ENCODE measurements at regions of chr15 and their contacts with region 1.

Region 1: GRCh38 chr15:89874926-89875564 is 18.7 kb downstream of the AP3S2 start:
- DNase-seq: peak; percentile 77 to 90
- ATAC-seq: peak; percentile 99 to 100
- H3K4me3 ChIP-seq: no peak overlapping the region
- H3K27ac ChIP-seq: no peak overlapping the region
- H3K4me1 ChIP-seq: no peaks in the 10 kb centered on the region
- CTCF ChIP-seq: peak; percentile 98
- EP300 ChIP-seq: no peak
- POLR2A ChIP-seq: no peak
- RAD21 ChIP-seq: peak; percentile 93 to 94

Region 2: GRCh38 chr15:89728254-89728653 is 146.8 kb before region 1 on chr15:
- CTCF ChIA-PET with region 1: interaction called, 19 read pairs
- POLR2A ChIA-PET with region 1: no interaction called
- DNase-seq: no peak
- ATAC-seq: no peak
- H3K4me3 ChIP-seq: no peak overlapping the region
- H3K27ac ChIP-seq: no peak overlapping the region
- H3K4me1 ChIP-seq: no peaks in the 10 kb centered on the region
- CTCF ChIP-seq: no peak
- EP300 ChIP-seq: no peak
- POLR2A ChIP-seq: no peak
- RAD21 ChIP-seq: no peak

Region 3: DNA sequence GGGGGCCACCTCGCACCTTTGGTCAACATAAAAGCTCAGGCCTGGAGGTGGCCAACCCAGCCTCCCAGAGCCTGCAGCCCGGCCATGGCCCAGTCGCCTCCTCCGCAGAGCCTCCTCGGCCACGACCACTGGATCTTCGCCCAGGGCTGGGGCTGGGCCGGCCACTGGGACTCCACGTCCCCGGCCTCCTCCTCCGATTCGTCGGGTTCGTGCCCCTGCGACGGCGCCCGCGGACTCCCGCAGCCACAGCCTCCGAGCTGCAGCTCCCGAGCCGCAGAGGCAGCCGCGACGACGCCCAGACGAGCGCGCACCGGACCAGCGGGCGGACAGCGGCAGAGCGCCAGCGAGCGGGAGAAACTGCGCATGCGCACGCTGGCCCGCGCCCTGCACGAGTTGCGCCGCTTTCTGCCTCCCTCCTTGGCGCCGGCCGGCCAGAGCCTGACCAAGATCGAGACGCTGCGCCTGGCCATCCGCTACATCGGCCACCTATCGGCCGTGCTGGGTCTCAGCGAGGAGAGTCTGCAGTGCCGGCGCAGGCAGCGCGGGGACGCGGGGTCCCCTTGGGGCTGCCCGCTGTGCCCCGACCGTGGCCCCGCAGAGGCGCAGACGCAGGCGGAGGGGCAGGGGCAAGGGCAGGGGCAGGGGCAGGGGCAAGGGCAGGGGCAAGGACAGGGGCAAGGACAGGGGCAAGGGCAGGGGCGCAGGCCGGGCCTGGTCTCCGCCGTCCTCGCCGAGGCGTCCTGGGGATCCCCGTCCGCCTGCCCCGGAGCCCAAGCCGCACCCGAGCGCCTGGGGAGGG is 98.6 kb before region 1 on chr15 and contains the start of gene MESP2:
- CTCF ChIA-PET with region 1: interaction called, 109 read pairs
- POLR2A ChIA-PET with region 1: interaction called, 3 read pairs
- DNase-seq: peak; percentile 73 to 90
- ATAC-seq: peak; percentile 87 to 96
- H3K4me3 ChIP-seq: peak within 1 kb of the TSS; percentile 38
- H3K27ac ChIP-seq: peak within 1 kb of the TSS; percentile 71 to 89
- H3K4me1 ChIP-seq: peaks cover 24% of the 10 kb centered on the region
- CTCF ChIP-seq: no peak
- EP300 ChIP-seq: no peak
- POLR2A ChIP-seq: peak; percentile 67
- RAD21 ChIP-seq: peak in 1 of 2 experiments; percentile 26; a peak in 2 of 5 replicates
- polyA plus RNA-seq, gene MESP2: 0.22 and 0.24 TPM in 2 replicates

Region 4: DNA sequence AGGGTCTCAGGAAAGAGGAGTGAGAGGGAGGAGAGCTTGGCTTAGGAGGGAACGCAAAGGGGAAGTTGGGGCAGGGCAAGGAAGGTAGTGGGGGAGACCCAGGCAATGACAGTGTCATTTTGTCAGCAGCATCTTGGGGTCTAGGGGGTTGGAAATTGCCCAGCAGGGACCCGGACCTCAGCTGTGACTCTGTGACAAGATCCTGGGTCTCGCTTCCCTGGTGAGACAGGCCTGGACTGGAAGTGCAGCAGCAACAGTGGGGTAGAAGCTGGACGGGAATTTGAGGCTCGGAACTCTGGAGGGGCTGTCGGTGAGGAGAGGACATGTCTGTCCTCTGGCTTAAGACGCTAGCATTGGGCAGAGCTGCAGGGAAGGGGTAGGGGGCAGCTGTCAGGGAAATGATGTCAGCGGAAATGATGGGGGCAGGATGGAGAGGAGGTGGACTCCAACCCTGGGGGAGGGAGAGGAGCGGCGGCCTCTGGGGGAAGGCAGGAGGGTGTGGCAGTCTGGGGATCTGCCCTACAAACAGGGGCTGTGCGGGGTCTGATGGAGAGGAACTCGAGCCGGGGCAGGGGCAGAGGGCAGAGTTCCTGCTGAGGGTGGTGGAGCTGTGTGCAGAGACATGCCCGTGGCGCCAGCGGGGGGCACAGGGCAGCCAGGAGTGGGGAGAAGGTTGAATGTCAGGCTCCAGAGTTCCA is 72.7 kb before region 1 on chr15:
- CTCF ChIA-PET with region 1: interaction called, 12 read pairs
- POLR2A ChIA-PET with region 1: no interaction called
- DNase-seq: no peak
- ATAC-seq: no peak; a peak in 1 of 6 replicates
- H3K4me3 ChIP-seq: no peak overlapping the region
- H3K27ac ChIP-seq: 0 out of 6 replicates have a peak overlapping the region, but pooled peaks of 1 of the 2 experiments have one; percentile 1
- H3K4me1 ChIP-seq: peaks cover 21% of the 10 kb centered on the region; the same call in 2 of the 3 replicates
- CTCF ChIP-seq: no peak
- EP300 ChIP-seq: no peak
- POLR2A ChIP-seq: no peak
- RAD21 ChIP-seq: no peak

Region 5: DNA sequence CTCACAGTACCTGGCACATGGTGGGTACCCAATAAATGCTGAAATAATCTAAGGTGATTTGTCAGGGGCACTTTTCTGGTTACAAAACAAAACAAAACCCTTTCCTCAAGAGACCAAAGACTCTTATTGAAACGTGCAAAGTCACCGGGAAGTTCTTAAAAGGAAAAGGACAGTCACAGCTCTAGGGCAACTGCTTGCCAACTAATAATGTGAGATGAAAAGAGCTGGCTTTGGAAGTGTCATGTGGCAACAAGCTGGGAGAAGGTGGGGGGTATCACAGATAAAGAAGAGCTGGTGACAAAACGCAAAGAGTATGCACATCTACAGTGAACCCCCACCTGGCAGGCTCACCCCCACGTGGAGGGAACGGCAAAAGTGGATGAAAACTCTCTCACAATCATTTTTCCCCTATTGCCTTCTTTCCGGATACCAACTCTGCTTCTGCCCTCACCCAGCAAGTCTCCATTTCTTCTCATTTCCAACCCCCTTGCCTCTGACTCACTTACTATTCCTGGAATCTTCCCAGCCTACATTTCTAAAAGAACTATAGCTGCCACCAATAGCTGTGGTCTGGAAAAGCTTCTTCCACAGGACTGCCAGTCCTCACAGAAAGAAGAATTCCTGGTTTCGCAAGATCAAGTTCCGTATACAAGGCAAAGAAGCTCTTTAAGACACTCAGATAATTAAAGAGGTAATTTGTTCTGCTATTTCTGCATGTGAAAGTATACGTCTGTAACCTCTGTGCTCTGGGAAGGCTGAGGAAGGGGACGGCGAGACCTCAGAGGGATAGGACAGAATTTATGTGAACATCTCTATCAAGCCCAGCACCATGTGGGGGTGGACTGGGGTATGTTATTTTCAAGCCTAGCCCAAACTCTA is 38.6 kb before region 1 on chr15:
- CTCF ChIA-PET with region 1: interaction called, 26 read pairs
- POLR2A ChIA-PET with region 1: no interaction called
- DNase-seq: no peak
- ATAC-seq: peak; percentile 48 to 71; a peak in 4 of 6 replicates
- H3K4me3 ChIP-seq: no peak overlapping the region
- H3K27ac ChIP-seq: peak overlapping the region; percentile 51 to 75; a peak in 5 of 6 replicates
- H3K4me1 ChIP-seq: peaks cover 25% of the 10 kb centered on the region
- CTCF ChIP-seq: no peak
- EP300 ChIP-seq: no peak
- POLR2A ChIP-seq: no peak
- RAD21 ChIP-seq: no peak

Region 6: GRCh38 chr15:89863918-89864317 is 11.1 kb before region 1 on chr15:
- CTCF ChIA-PET with region 1: interaction called, 53 read pairs
- POLR2A ChIA-PET with region 1: interaction called, 3 read pairs
- DNase-seq: no peak
- ATAC-seq: no peak
- H3K4me3 ChIP-seq: no peak overlapping the region
- H3K27ac ChIP-seq: no peak overlapping the region
- H3K4me1 ChIP-seq: peaks cover 2% of the 10 kb centered on the region
- CTCF ChIP-seq: no peak
- EP300 ChIP-seq: no peak
- POLR2A ChIP-seq: no peak
- RAD21 ChIP-seq: 0 out of 5 replicates have a peak, but pooled peaks of 1 of the 2 experiments have one; percentile 9

Region 7: DNA sequence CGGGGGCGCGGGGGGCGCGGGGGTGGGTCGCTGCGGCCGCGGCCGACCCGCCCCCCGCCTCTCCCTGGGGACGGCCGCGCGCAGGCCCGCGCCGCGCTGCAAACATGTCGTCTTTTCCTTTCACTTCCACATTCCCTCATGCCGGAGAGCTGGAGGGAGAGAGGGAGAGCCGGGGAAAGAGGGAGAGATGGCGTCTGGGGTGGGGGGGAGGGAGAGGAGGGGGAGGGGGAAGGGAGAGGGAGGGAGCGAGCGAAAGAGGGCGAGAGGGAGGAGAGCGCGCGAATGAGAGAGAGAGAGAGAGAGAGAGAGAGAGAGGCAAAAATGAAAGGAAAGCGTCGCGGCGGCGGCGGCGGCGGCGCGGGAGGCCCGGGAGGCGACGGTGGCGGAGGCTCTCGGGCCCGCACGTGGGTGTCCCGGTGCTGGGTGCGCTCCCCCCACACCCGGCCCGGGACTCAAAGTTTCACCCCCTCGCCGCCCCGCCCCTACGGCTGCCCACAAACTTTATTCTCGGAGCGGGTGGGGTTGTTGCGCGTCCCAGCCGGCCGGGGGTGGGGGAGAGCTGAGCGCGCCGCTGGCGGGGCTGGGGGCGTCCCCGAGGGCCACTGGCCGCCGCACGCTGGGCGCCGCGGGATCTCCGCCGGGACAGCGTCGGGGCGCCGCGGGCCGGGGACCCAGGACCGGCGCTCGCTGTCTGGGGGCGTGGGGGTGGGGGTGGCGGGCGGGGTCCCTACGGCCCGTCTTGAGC is 126.8 kb after region 1 on chr15:
- CTCF ChIA-PET with region 1: no interaction called
- POLR2A ChIA-PET with region 1: no interaction called
- DNase-seq: peak; percentile 67 to 75
- ATAC-seq: peak; percentile 11 to 37
- H3K4me3 ChIP-seq: peak overlapping the region; percentile 85
- H3K27ac ChIP-seq: peak overlapping the region; percentile 93 to 97
- H3K4me1 ChIP-seq: peaks cover 66% of the 10 kb centered on the region
- CTCF ChIP-seq: no peak
- EP300 ChIP-seq: no peak
- POLR2A ChIP-seq: no peak
- RAD21 ChIP-seq: no peak

Region 8: GRCh38 chr15:90138071-90138833 is 263.2 kb after region 1 on chr15:
- CTCF ChIA-PET with region 1: no interaction called
- POLR2A ChIA-PET with region 1: no interaction called
- DNase-seq: no peak
- ATAC-seq: no peak
- H3K4me3 ChIP-seq: no peak overlapping the region
- H3K27ac ChIP-seq: no peak overlapping the region
- H3K4me1 ChIP-seq: peaks cover 9% of the 10 kb centered on the region
- CTCF ChIP-seq: no peak
- EP300 ChIP-seq: no peak
- POLR2A ChIP-seq: no peak
- RAD21 ChIP-seq: no peak